ENCODE measurements at regions of chr4 and their contacts with region 1.

Region 1: DNA sequence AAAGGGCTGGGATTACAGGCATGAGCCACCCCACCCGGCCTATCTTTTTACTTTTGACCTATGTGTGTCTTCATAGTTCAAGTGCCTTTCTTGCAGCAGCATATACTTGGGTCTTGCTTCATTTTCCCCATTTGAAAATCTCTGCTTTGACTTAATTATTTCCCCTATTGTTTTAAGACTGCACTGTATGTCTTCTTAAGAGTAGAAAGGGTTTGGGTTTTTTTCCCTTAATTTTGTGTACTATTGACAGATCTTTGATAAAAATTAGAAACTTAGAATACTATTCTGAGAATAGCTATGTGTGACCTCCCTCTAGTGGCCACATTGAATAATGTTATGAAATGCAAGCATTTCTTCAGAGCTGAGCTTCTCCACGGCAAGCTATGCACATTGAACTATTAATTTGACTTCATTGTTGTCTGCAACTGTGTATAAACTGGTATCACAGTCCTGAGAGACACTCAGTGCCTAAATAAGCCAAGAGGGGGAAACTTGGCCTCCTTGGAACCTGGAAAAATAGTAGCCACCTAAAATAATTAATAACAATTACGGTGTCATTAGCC is 8.7 kb upstream of the SLC25A4 start:
- H3K4me3 ChIP-seq: no peak overlapping the region
- H3K27ac ChIP-seq: no peak overlapping the region
- H3K4me1 ChIP-seq: no peaks in the 10 kb centered on the region
- CTCF ChIP-seq: no peak

Region 2: GRCh38 chr4:185005216-185005819 is 129.1 kb before region 1 on chr4:
- CTCF ChIA-PET with region 1: interaction called, 10 read pairs
- POLR2A ChIA-PET with region 1: no interaction called
- H3K4me3 ChIP-seq: no peak overlapping the region
- H3K27ac ChIP-seq: no peak overlapping the region
- H3K4me1 ChIP-seq: no peaks in the 10 kb centered on the region
- CTCF ChIP-seq: peak; percentile 74

Region 3: GRCh38 chr4:185039508-185040273 is 94.7 kb before region 1 on chr4:
- CTCF ChIA-PET with region 1: interaction called, 10 read pairs
- POLR2A ChIA-PET with region 1: no interaction called
- H3K4me3 ChIP-seq: no peak overlapping the region
- H3K27ac ChIP-seq: no peak overlapping the region
- H3K4me1 ChIP-seq: no peaks in the 10 kb centered on the region
- CTCF ChIP-seq: no peak

Region 4: DNA sequence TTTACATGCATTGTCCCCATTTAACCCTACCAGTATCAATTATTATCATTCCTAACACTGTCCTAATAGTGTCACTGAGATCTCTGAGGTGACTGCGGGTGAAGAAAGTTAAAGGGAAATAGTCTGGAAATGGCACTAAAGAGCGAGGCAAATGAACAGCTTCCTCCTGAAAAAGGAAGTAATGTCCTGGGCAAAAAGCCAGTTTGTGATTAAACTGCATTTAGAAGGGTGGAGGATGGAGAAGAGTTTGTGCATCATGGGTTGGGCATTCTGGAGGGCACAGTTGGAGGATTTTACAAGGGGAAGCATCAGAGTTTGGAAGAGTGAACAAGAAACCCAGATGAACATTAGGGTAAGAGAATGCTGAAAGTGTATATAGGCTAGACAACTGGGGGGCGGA is 51.8 kb before region 1 on chr4:
- CTCF ChIA-PET with region 1: no interaction called
- POLR2A ChIA-PET with region 1: no interaction called
- H3K4me3 ChIP-seq: no peak overlapping the region
- H3K27ac ChIP-seq: no peak overlapping the region
- H3K4me1 ChIP-seq: no peaks in the 10 kb centered on the region
- CTCF ChIP-seq: no peak

Measured in HEK293 (cell line).